Breast epithelium (tissue), 4 donors: ENCODE measurements at regions of chr18 and their contacts with region 1.

Region 1: DNA sequence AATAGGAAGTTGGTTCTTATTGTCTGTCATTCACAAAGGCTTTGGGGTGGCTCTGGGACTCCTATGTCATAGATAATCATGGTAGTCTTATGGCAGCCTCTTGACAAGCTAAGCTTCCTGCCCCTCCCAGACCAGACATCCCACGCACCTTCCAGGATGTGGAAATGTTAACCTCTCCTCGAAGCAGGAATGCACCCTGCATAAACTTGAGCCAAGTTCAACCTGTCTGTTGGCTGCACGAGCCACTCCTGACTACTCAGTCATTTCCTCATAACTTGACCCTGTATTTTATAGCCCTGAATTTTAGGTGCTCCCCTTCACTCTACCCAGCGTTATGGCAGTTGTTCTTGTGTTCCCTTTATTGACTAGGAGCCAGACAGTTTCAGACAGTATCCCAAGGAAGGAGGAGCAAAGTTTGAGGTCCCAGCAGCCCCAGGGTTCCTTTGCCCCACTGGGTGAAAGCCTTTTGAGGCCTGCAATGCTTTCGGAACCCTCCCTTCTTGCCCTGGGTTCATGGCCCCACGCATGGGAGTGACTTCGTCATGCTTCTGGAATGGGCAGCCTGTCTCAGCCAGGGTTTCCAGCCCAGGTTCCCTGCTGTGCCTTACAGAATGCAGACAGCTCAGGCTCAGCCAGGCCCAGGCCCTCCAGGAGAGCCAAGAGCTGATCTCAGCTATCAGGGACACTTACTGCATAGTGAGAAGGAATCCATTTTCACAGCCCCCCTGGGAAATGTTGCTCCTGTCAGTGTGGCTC is 15.6 kb upstream of the INO80C start:
- DNase-seq: peak in 1 of 2 donors; percentile 27
- H3K4me3 ChIP-seq: no peak overlapping the region
- H3K27ac ChIP-seq: peak overlapping the region in 1 of 2 donors; percentile 33
- H3K4me1 ChIP-seq: no peaks in the 10 kb centered on the region
- H3K27me3 ChIP-seq: no peaks in the 10 kb centered on the region
- CTCF ChIP-seq: no peak
- POLR2A ChIP-seq: no peak

Region 2: GRCh38 chr18:35535297-35535696 is 21.9 kb after region 1 on chr18:
- intact Hi-C with region 1: loop called (anchors 2 kb)
- DNase-seq: no peak
- H3K4me3 ChIP-seq: no peak overlapping the region
- H3K27ac ChIP-seq: no peak overlapping the region
- H3K4me1 ChIP-seq: no peaks in the 10 kb centered on the region
- H3K27me3 ChIP-seq: no peaks in the 10 kb centered on the region
- CTCF ChIP-seq: no peak
- POLR2A ChIP-seq: no peak